ENCODE measurements at regions of chr1 and their contacts with region 1.

Region 1: GRCh38 chr1:243255791-243256512 is at the start of gene SDCCAG8:
- DNase-seq: peak; percentile 96
- ATAC-seq: peak; percentile 82
- H3K4me3 Mint-ChIP-seq: peak within 1 kb of the TSS; percentile 100
- H3K27ac Mint-ChIP-seq: peak within 1 kb of the TSS; percentile 97
- H3K4me1 Mint-ChIP-seq: peaks cover 27% of the 10 kb centered on the region
- H3K27me3 Mint-ChIP-seq: no peaks in the 10 kb centered on the region
- total RNA-seq, gene SDCCAG8: 26.4 to 26.5 TPM

Region 2: DNA sequence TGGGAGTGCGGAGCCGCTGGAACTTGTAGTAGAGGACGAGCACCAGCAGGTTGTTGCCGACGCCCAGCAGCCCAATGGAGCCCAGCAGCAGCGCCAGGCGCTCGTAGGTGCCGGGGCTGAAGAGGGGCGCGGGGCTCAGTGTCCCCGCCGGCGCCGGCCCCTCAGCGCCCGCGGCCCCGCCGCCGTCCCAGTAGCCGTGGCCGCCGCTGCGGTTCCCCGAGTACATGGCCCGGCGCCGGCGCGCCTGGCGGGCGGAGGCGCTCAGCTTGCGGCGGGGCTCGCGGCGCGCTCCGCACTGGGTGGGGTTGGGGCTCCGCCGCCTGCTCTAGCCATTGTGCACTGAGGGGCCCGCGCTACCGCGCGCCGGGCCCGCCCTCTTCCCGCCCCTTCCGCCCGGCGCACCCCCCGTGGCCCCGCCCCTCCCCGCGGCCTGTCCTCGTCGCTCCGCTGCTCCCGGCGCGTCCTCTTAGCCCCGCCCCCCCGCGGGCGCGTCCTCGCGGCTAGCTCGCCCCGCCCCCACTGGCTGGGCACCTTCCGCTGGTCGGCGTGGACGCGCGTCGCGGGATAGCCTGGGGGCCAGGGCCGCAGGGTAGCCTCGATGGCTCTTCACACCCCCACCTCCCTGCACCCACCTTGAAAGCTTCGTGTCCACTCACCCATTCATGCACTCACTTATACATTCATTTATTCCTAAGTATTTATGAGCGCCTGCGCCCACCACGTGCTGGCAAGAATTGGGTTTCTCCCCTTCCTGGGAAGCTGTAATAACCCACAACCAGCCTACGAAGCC is 1615.7 kb before region 1 on chr1 and contains the starts of genes CHML and OPN3:
- CTCF ChIA-PET with region 1: no interaction called
- POLR2A ChIA-PET with region 1: no interaction called
- intact Hi-C with region 1: loop called in 1 of 2 experiments (anchors 1 kb)
- DNase-seq: peak; percentile 96
- ATAC-seq: peak; percentile 97
- H3K4me3 Mint-ChIP-seq: peak within 1 kb of the TSS; percentile 77
- H3K27ac Mint-ChIP-seq: peak within 1 kb of the TSS; percentile 83
- H3K4me1 Mint-ChIP-seq: peaks cover 43% of the 10 kb centered on the region
- H3K27me3 Mint-ChIP-seq: no peaks in the 10 kb centered on the region
- total RNA-seq, gene CHML: 13.4 to 16.5 TPM
- total RNA-seq, gene OPN3: 10.8 to 12.2 TPM

Region 3: GRCh38 chr1:241847796-241848685 is 1407.9 kb before region 1 on chr1 and contains the start of gene EXO1:
- CTCF ChIA-PET with region 1: no interaction called
- POLR2A ChIA-PET with region 1: no interaction called
- intact Hi-C with region 1: loop called in 1 of 2 experiments (anchors 5 kb)
- DNase-seq: peak; percentile 95
- ATAC-seq: peak; percentile 97
- H3K4me3 Mint-ChIP-seq: peak within 1 kb of the TSS; percentile 99
- H3K27ac Mint-ChIP-seq: peak within 1 kb of the TSS; percentile 99
- H3K4me1 Mint-ChIP-seq: peaks cover 14% of the 10 kb centered on the region
- H3K27me3 Mint-ChIP-seq: no peaks in the 10 kb centered on the region
- total RNA-seq, gene EXO1: 53.8 to 57.8 TPM

Region 4: DNA sequence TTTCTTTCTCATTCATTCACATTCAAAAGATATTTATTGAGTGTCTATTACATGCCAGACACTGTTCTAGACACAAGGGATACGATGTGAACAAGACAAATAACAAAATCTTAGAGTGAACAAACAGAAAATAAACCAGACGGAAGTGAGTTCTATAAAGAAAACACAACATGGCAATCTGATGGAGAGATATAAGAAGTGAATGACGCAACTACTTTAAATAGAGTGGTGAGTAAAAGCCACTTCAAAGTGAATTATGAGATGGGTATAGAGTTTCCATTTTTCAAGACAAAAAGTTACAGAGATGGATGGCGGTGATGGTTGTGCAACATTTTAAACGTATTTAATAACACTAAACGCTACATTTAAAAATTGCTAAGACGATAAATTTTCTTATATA is 76.2 kb before region 1 on chr1:
- CTCF ChIA-PET with region 1: no interaction called
- POLR2A ChIA-PET with region 1: no interaction called
- intact Hi-C with region 1: no loop called
- DNase-seq: no peak
- ATAC-seq: peak; percentile 89
- H3K4me3 Mint-ChIP-seq: peak overlapping the region; percentile 3
- H3K27ac Mint-ChIP-seq: peak overlapping the region; percentile 80
- H3K4me1 Mint-ChIP-seq: peaks cover 22% of the 10 kb centered on the region
- H3K27me3 Mint-ChIP-seq: no peaks in the 10 kb centered on the region

Region 5: GRCh38 chr1:243325305-243325890 is 69.4 kb after region 1 on chr1:
- CTCF ChIA-PET with region 1: no interaction called
- POLR2A ChIA-PET with region 1: no interaction called
- intact Hi-C with region 1: loop called in 1 of 2 experiments (anchors 1 kb)
- DNase-seq: peak; percentile 19
- ATAC-seq: no peak
- H3K4me3 Mint-ChIP-seq: no peak overlapping the region
- H3K27ac Mint-ChIP-seq: no peak overlapping the region
- H3K4me1 Mint-ChIP-seq: no peaks in the 10 kb centered on the region
- H3K27me3 Mint-ChIP-seq: no peaks in the 10 kb centered on the region

Region 6: DNA sequence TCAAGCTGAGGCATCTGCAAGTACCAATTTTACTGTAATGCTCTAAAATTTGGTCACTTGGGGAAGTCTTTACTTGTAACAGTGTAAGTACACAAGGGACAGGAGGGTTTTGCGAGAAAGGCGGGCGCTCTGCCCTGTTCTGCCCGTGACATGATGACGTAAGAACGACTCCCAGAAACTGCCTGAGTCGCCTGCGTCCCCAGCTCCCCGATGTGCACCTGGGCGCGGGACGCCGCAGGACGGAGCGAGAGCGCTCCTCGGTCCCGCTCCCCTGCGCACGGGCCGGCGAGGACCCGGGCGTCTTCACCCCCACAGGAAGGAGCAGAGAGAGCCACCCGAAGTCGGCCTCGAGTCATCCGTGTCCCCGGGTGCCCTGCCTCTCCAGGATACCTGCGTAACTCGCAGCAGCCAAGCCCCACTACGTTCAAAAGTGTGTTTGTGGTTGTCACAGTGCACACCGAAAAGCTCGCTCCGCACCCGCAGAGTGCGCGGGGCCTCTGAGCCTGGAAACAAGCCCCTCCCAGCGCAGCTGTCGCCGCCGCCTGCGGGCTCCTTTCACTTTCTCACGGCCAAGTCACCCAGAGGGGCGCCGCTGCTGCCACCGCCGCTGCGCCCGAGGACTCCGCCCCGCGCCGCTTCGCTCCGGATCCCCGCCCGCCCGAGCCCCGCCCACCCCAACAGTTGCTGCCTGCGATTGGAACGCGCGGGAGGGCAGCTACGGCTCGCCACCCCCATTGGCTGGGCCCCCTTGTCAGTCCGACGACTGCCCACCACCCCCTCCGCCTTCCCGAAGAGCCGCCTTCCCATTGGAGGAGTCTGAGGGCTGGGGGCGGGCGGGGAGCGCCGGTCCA is 791.9 kb after region 1 on chr1:
- CTCF ChIA-PET with region 1: no interaction called
- POLR2A ChIA-PET with region 1: interaction called, 3 read pairs
- intact Hi-C with region 1: loop called (anchors 1 to 2 kb)
- DNase-seq: peak; percentile 98
- ATAC-seq: peak; percentile 92
- H3K4me3 Mint-ChIP-seq: peak overlapping the region; percentile 93
- H3K27ac Mint-ChIP-seq: peak overlapping the region; percentile 97
- H3K4me1 Mint-ChIP-seq: peaks cover 35% of the 10 kb centered on the region
- H3K27me3 Mint-ChIP-seq: no peaks in the 10 kb centered on the region

Region 7: DNA sequence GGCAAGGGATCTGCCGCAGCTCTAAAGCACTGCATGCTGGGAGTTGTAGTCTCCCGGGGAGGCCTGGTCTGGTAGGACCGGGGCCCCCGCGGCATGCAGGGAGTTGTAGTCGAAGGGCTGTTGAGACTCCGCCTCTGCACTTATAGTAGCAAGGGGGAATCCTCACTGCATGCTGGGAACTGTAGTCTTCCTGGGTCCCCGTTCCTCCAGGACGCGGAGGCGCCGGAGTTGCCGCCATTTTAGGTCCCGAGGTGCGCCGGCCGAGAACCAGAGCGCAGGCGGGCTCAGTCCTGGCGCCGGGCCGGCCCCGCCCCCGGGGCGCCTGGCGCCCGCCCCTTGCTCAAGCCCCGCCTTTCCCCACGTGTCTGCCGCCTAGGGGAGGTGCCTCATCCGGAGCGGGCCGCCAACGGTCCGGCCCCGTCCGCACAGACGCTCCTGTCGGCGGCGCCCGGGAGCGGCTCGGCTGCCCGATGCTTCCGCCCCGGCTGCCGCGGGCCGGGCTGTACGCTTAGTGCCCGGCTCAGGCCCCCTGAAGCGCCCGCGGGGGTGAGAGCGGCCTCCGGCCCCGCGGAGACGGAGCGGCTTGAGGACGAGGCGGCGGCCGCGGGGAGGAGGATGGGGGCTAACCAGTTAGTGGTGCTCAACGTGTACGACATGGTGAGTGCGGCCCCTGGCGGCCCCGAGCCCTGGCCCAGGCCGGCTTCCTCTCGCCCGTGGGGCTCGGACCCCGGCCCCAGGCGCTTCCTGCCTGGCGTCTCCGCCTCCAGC is 1396.9 kb after region 1 on chr1 and contains the start of gene DESI2:
- CTCF ChIA-PET with region 1: no interaction called
- POLR2A ChIA-PET with region 1: no interaction called
- intact Hi-C with region 1: loop called in 1 of 2 experiments (anchors 2 kb)
- DNase-seq: peak; percentile 98
- ATAC-seq: peak; percentile 96
- H3K4me3 Mint-ChIP-seq: peak within 1 kb of the TSS; percentile 76
- H3K27ac Mint-ChIP-seq: peak within 1 kb of the TSS; percentile 95
- H3K4me1 Mint-ChIP-seq: peaks cover 19% of the 10 kb centered on the region
- H3K27me3 Mint-ChIP-seq: no peaks in the 10 kb centered on the region
- total RNA-seq, gene DESI2: 24.5 to 26.0 TPM

Region 8: GRCh38 chr1:244970661-244971551 is 1715.0 kb after region 1 on chr1:
- CTCF ChIA-PET with region 1: no interaction called
- POLR2A ChIA-PET with region 1: no interaction called
- intact Hi-C with region 1: loop called in 1 of 2 experiments (anchors 10 kb)
- DNase-seq: peak; percentile 96
- ATAC-seq: peak; percentile 84
- H3K4me3 Mint-ChIP-seq: peak overlapping the region; percentile 92
- H3K27ac Mint-ChIP-seq: peak overlapping the region; percentile 97
- H3K4me1 Mint-ChIP-seq: peaks cover 15% of the 10 kb centered on the region
- H3K27me3 Mint-ChIP-seq: no peaks in the 10 kb centered on the region